ENCODE measurements at regions of chr15 and their contacts with region 1.

Region 1: GRCh38 chr15:88620995-88621772 is at the start of gene AEN:
- DNase-seq: peak; percentile 97
- H3K4me3 Mint-ChIP-seq: peak within 1 kb of the TSS; percentile 94
- H3K27ac Mint-ChIP-seq: peak within 1 kb of the TSS; percentile 97
- H3K4me1 Mint-ChIP-seq: peaks cover 39% of the 10 kb centered on the region
- H3K27me3 Mint-ChIP-seq: no peaks in the 10 kb centered on the region
- total RNA-seq, gene AEN: 55.5 to 55.7 TPM

Region 2: GRCh38 chr15:88299497-88299896 is 321.7 kb before region 1 on chr15:
- CTCF ChIA-PET with region 1: no interaction called
- POLR2A ChIA-PET with region 1: no interaction called
- intact Hi-C with region 1: no loop called
- DNase-seq: no peak
- H3K4me3 Mint-ChIP-seq: no peak overlapping the region
- H3K27ac Mint-ChIP-seq: no peak overlapping the region
- H3K4me1 Mint-ChIP-seq: no peaks in the 10 kb centered on the region
- H3K27me3 Mint-ChIP-seq: peaks cover 2% of the 10 kb centered on the region

Region 3: GRCh38 chr15:88546248-88547129 is 74.7 kb before region 1 on chr15 and contains the start of gene DET1:
- CTCF ChIA-PET with region 1: no interaction called
- POLR2A ChIA-PET with region 1: no interaction called
- intact Hi-C with region 1: loop called (anchors 1 kb)
- DNase-seq: peak; percentile 98
- H3K4me3 Mint-ChIP-seq: peak within 1 kb of the TSS; percentile 88
- H3K27ac Mint-ChIP-seq: peak within 1 kb of the TSS; percentile 89
- H3K4me1 Mint-ChIP-seq: peaks cover 13% of the 10 kb centered on the region
- H3K27me3 Mint-ChIP-seq: no peaks in the 10 kb centered on the region
- total RNA-seq, gene DET1: 1.9 to 2.2 TPM

Region 4: GRCh38 chr15:88657326-88658069 is 36.3 kb after region 1 on chr15:
- CTCF ChIA-PET with region 1: interaction called, 18 read pairs
- POLR2A ChIA-PET with region 1: interaction called, 4 read pairs
- intact Hi-C with region 1: no loop called
- DNase-seq: no peak
- H3K4me3 Mint-ChIP-seq: no peak overlapping the region
- H3K27ac Mint-ChIP-seq: peak overlapping the region; percentile 10
- H3K4me1 Mint-ChIP-seq: peaks cover 56% of the 10 kb centered on the region
- H3K27me3 Mint-ChIP-seq: no peaks in the 10 kb centered on the region

Region 5: DNA sequence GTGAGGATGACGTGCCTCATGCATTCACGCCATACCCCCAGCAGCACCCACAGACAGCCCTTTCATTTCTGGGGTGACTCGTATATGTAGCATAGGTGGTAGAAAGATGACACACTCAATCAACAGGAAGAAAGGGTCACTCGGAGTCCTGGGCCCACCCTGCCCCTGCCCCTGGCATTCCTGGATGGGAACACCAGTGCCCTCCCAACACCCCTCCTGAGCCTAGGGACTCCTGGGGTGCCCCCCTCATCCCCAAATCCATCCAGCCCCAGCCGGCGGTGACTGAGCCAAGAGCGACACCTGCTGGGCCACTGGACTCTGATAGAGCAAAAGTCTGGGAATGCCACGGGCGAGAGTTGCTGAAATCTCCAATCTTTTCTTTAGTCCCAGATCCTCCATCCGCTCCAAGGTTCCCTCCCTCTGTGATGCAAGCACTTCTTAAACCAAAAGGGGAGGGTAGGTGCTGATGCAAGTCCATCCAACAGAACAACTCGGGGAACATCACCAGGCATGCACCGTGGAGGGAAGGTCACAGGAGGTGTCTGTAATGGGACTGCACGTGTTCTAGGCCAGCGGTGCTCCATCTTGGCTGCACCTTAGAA is 213.1 kb after region 1 on chr15:
- CTCF ChIA-PET with region 1: interaction called, 5 read pairs
- POLR2A ChIA-PET with region 1: no interaction called
- intact Hi-C with region 1: loop called (anchors 2 kb)
- DNase-seq: peak; percentile 29
- H3K4me3 Mint-ChIP-seq: no peak overlapping the region
- H3K27ac Mint-ChIP-seq: no peak overlapping the region
- H3K4me1 Mint-ChIP-seq: no peaks in the 10 kb centered on the region
- H3K27me3 Mint-ChIP-seq: peaks cover under 1% of the 10 kb centered on the region

Region 6: GRCh38 chr15:89017370-89018066 is 396.3 kb after region 1 on chr15:
- CTCF ChIA-PET with region 1: interaction called, 4 read pairs
- POLR2A ChIA-PET with region 1: no interaction called
- intact Hi-C with region 1: loop called (anchors 5 kb)
- DNase-seq: peak; percentile 90
- H3K4me3 Mint-ChIP-seq: peak overlapping the region; percentile 43
- H3K27ac Mint-ChIP-seq: no peak overlapping the region
- H3K4me1 Mint-ChIP-seq: peaks cover 15% of the 10 kb centered on the region
- H3K27me3 Mint-ChIP-seq: peaks cover 2% of the 10 kb centered on the region

Region 7: DNA sequence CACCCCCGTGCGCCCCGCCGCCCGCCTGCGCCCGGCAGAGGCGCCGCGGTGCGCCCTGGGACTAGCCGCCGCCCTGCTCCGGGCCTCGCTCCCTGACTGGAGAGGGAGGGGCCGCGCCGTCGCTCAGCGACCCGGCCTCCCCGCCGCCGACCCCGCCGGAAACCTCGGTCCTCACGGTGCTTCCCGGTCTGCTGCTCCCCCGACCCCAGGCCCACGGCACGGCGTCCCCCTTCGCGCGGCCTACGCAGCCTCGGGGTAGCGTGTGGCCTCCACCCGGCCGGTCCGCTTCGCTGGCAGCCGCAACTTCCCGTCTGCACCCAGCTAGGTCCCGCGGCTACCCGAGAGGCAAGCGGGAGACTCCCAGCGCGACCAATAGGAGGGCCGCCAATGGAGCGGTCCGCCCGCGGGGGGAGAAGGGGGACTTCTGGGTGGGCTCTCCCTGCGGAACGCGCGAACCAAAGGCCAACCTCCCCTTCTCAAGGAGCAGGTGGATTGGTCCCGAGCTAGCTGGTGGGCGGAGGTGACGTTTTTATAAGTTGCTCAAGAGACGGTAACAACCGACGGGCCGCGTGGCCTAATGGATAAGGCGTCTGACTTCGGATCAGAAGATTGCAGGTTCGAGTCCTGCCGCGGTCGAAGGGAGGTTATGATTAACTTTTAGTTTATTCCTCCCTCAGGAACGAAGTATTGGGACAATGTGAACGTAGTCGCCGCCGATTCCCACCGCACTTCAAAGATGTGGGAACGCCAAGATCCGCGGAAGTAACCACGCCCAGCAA is 713.5 kb after region 1 on chr15 and contains the start of gene POLG:
- CTCF ChIA-PET with region 1: no interaction called
- POLR2A ChIA-PET with region 1: no interaction called
- intact Hi-C with region 1: loop called (anchors 10 kb)
- DNase-seq: peak; percentile 99
- H3K4me3 Mint-ChIP-seq: peak within 1 kb of the TSS; percentile 85
- H3K27ac Mint-ChIP-seq: peak within 1 kb of the TSS; percentile 93
- H3K4me1 Mint-ChIP-seq: peaks cover 50% of the 10 kb centered on the region
- H3K27me3 Mint-ChIP-seq: peaks cover 4% of the 10 kb centered on the region
- total RNA-seq, gene POLG: 94.8 to 97.4 TPM

Measured in activated CD4-positive, alpha-beta memory T cell treated with anti-CD3 and anti-CD28 coated beads for 36 hours (primary cell).